Posterior vena cava (tissue), 2 donors: ENCODE measurements at regions of chrX and their contacts with region 1.

Region 1: GRCh38 chrX:150236327-150236726 is 126.8 kb upstream of the MAMLD1 start:
- DNase-seq: no peak

Region 2: DNA sequence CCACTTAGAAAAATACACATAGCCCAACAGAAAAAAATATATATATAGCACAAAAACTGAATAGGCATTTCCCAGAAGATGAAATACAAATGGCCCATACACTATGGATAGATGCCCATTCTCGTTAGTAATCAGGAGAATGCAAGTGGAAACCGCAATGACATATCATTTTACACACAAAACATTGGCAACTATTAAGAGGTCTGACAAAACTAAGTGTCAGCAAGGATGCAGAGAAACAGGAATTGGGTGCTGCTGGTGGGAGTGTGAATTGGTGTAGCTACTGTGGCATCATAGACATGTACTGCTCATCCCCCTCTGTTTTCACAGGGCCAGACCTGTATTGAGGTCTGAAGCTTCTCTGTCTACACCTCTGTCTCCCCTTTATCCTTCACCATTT is 1051.2 kb before region 1 on chrX:
- intact Hi-C with region 1: no loop called
- DNase-seq: no peak

Region 3: GRCh38 chrX:149950681-149951080 is 285.6 kb before region 1 on chrX:
- intact Hi-C with region 1: no loop called
- DNase-seq: no peak

Region 4: DNA sequence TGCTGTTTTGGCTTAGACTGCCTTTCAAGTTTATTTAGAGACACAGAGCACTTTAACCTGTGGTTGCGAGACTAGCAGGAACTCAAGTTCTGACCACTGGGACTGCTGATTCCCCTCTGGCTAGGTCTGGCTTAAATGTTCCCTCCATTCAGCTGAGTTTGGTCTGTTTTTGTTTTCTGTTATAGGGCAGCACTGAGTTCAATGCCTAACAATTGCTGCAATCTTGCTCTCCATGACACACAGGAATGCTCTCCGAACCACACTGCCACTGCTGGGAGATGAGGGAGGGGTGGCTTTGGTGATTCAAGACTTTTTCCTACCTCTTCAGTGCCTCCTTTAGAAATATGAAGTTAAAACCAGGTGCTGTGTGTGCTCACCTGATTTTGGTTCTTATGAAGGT is 191.8 kb before region 1 on chrX:
- intact Hi-C with region 1: no loop called
- DNase-seq: no peak

Region 5: GRCh38 chrX:150167482-150168324 is 68.6 kb before region 1 on chrX:
- intact Hi-C with region 1: loop called in 1 of 2 experiments (anchors 2 kb)
- DNase-seq: no peak

Region 6: DNA sequence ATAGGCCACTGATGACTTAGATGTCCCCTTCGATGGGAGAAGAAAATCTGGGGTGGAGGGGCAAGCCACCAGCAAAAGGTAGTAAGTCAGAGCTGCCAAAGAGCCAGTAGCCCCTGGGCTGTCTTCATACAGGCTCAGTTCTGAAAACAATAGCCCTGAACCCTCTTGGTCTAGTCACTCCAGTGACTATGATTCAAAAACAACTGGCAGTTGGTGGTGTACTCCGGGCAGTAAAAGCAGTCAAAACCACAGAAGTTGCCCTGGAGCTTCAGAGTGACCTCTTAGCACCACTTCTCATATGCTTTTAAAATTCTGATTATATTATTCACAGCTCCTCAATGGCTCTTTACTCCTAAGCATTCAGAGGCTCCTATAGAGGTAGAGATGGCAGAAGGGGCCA is 37.6 kb before region 1 on chrX:
- intact Hi-C with region 1: no loop called
- DNase-seq: no peak

Region 7: GRCh38 chrX:150919401-150919800 is 683.1 kb after region 1 on chrX:
- intact Hi-C with region 1: loop called in 1 of 2 experiments (anchors 5 kb)
- DNase-seq: no peak